B cell (primary cell): ENCODE measurements at regions of chr17 and their contacts with region 1.

Region 1: GRCh38 chr17:48131216-48131824 is 23.8 kb downstream of the SNX11 start:
- DNase-seq: peak; percentile 79
- ATAC-seq: peak; percentile 87
- H3K4me3 ChIP-seq: no peak overlapping the region
- H3K4me3 Mint-ChIP-seq: no peak overlapping the region
- H3K27ac ChIP-seq: no peak overlapping the region
- H3K27ac Mint-ChIP-seq: peak overlapping the region; percentile 7
- H3K4me1 ChIP-seq: no peaks in the 10 kb centered on the region
- H3K4me1 Mint-ChIP-seq: peaks cover 3% of the 10 kb centered on the region
- H3K27me3 ChIP-seq: no peaks in the 10 kb centered on the region
- H3K27me3 Mint-ChIP-seq: no peaks in the 10 kb centered on the region
- CTCF ChIP-seq: peak; percentile 90

Region 2: GRCh38 chr17:48101012-48101720 is 30.2 kb before region 1 on chr17 and contains the start of gene CBX1:
- CTCF ChIA-PET with region 1: interaction called, 15 read pairs
- POLR2A ChIA-PET with region 1: interaction called, 7 read pairs
- intact Hi-C with region 1: loop called (anchors 1 kb)
- DNase-seq: peak; percentile 94
- ATAC-seq: peak; percentile 94
- H3K4me3 ChIP-seq: peak within 1 kb of the TSS; percentile 68 to 85 (median 77)
- H3K4me3 Mint-ChIP-seq: peak within 1 kb of the TSS; percentile 91
- H3K27ac ChIP-seq: peak within 1 kb of the TSS; percentile 72 to 76
- H3K27ac Mint-ChIP-seq: peak within 1 kb of the TSS; percentile 93
- H3K4me1 ChIP-seq: peaks cover 18 to 28% of the 10 kb centered on the region in 2 donors
- H3K4me1 Mint-ChIP-seq: peaks cover 41% of the 10 kb centered on the region
- H3K27me3 ChIP-seq: no peaks in the 10 kb centered on the region
- H3K27me3 Mint-ChIP-seq: no peaks in the 10 kb centered on the region
- CTCF ChIP-seq: no peak
- total RNA-seq, gene CBX1: 29.7 and 33.1 TPM in 2 replicates

Region 3: GRCh38 chr17:48107168-48108132 is 23.9 kb before region 1 on chr17 and contains the start of gene SNX11:
- CTCF ChIA-PET with region 1: interaction called, 19 read pairs
- POLR2A ChIA-PET with region 1: interaction called, 11 read pairs
- intact Hi-C with region 1: loop called (anchors 2 kb)
- DNase-seq: peak; percentile 94
- ATAC-seq: peak; percentile 78
- H3K4me3 ChIP-seq: peak within 1 kb of the TSS; percentile 71 to 96 (median 79)
- H3K4me3 Mint-ChIP-seq: peak within 1 kb of the TSS; percentile 91
- H3K27ac ChIP-seq: peak within 1 kb of the TSS; percentile 88 to 94
- H3K27ac Mint-ChIP-seq: peak within 1 kb of the TSS; percentile 97
- H3K4me1 ChIP-seq: peaks cover 46 to 61% of the 10 kb centered on the region in 2 donors
- H3K4me1 Mint-ChIP-seq: peaks cover 58% of the 10 kb centered on the region
- H3K27me3 ChIP-seq: no peaks in the 10 kb centered on the region
- H3K27me3 Mint-ChIP-seq: no peaks in the 10 kb centered on the region
- CTCF ChIP-seq: no peak
- total RNA-seq, gene SNX11: 42.0 and 47.1 TPM in 2 replicates

Region 4: GRCh38 chr17:48618256-48618897 is 487.1 kb after region 1 on chr17:
- CTCF ChIA-PET with region 1: interaction called, 7 read pairs
- POLR2A ChIA-PET with region 1: no interaction called
- intact Hi-C with region 1: loop called (anchors 1 kb)
- DNase-seq: peak; percentile 87
- ATAC-seq: peak; percentile 71
- H3K4me3 ChIP-seq: no peak overlapping the region
- H3K4me3 Mint-ChIP-seq: no peak overlapping the region
- H3K27ac ChIP-seq: no peak overlapping the region
- H3K27ac Mint-ChIP-seq: peak overlapping the region; percentile 74
- H3K4me1 ChIP-seq: peaks cover 33 to 51% of the 10 kb centered on the region in 2 donors
- H3K4me1 Mint-ChIP-seq: peaks cover 28% of the 10 kb centered on the region
- H3K27me3 ChIP-seq: peaks cover 0 to 97% (median 72%) of the 10 kb centered on the region in 4 experiments
- H3K27me3 Mint-ChIP-seq: peaks cover 86% of the 10 kb centered on the region
- CTCF ChIP-seq: peak; percentile 97